Prostate gland (tissue), 2 donors: ENCODE measurements at regions of chr13 and their contacts with region 1.

Region 1: DNA sequence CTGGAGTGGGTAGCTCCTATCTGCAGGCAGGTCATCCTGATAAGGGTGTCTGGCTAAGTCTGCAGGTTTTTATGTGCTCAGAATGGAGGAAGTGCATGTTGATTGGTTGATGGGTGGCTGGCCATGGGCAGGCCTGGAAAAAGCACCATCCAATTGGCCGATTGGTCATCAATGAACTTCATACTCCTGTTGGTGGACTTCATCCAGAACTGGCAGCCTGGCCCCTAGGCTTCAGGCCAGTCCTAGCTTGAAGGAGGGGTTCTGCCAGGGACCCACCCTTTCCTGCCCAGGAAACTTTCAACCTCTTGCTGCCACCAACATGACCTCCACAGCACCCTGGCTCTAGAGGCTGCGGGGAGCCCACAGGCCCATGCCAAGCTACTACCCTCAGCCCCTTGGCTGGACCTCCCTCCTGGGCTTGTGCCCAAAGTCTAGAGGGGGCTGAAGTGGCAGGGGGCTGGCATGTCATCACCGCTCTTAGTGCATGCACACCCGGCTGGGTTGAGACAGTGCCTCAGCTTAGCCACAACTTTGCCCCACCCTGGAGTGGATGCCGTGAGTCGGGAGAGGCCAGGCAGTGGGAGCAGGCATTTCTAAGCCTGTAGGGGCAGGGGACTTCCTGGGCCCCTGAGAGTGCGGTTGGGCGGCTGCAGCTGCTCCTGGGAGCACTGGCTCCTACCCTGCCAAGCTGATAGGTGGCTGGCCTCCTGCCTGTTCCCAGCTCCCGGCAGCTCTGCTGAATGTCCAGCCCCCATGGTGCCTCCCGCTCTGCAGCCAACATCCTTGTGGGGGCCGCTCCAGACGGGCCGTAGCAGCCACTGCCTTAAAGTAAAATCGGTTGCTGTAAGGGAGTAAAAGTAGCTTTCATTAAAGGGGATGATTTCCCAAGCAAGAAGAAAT is 13.2 kb downstream of the DNAJC15 start:
- DNase-seq: no peak
- H3K4me3 ChIP-seq: no peak overlapping the region
- H3K27ac ChIP-seq: no peak overlapping the region
- H3K4me1 ChIP-seq: no peaks in the 10 kb centered on the region
- H3K27me3 ChIP-seq: no peaks in the 10 kb centered on the region
- CTCF ChIP-seq: no peak
- POLR2A ChIP-seq: no peak

Region 2: GRCh38 chr13:42432711-42433110 is 603.9 kb before region 1 on chr13:
- intact Hi-C with region 1: no loop called
- DNase-seq: no peak
- H3K4me3 ChIP-seq: no peak overlapping the region
- H3K27ac ChIP-seq: no peak overlapping the region
- H3K4me1 ChIP-seq: no peaks in the 10 kb centered on the region
- H3K27me3 ChIP-seq: no peaks in the 10 kb centered on the region
- CTCF ChIP-seq: no peak
- POLR2A ChIP-seq: no peak

Region 3: GRCh38 chr13:42991892-42992763 is 44.5 kb before region 1 on chr13 and contains the start of gene EPSTI1:
- intact Hi-C with region 1: loop called (anchors 5 kb)
- DNase-seq: peak; percentile 47
- H3K4me3 ChIP-seq: peak within 1 kb of the TSS; percentile 46 to 56
- H3K27ac ChIP-seq: peak within 1 kb of the TSS; percentile 79 to 82
- H3K4me1 ChIP-seq: peaks cover 3% of the 10 kb centered on the region
- H3K27me3 ChIP-seq: no peaks in the 10 kb centered on the region
- CTCF ChIP-seq: no peak
- POLR2A ChIP-seq: no peak
- total RNA-seq, gene EPSTI1: 1.7 to 8.0 TPM